Vagina (tissue), 2 donors: ENCODE measurements at regions of chr6 and their contacts with region 1.

Region 1: GRCh38 chr6:6547110-6547879 is 41.2 kb upstream of the LY86 start:
- DNase-seq: peak in 1 of 2 donors; percentile 91
- H3K4me3 ChIP-seq: peak overlapping the region; percentile 37 to 49
- H3K27ac ChIP-seq: no peak overlapping the region
- H3K4me1 ChIP-seq: peaks cover 14% of the 10 kb centered on the region
- H3K27me3 ChIP-seq: no peaks in the 10 kb centered on the region
- CTCF ChIP-seq: peak; percentile 94 to 95 (median 95)
- POLR2A ChIP-seq: no peak

Region 2: DNA sequence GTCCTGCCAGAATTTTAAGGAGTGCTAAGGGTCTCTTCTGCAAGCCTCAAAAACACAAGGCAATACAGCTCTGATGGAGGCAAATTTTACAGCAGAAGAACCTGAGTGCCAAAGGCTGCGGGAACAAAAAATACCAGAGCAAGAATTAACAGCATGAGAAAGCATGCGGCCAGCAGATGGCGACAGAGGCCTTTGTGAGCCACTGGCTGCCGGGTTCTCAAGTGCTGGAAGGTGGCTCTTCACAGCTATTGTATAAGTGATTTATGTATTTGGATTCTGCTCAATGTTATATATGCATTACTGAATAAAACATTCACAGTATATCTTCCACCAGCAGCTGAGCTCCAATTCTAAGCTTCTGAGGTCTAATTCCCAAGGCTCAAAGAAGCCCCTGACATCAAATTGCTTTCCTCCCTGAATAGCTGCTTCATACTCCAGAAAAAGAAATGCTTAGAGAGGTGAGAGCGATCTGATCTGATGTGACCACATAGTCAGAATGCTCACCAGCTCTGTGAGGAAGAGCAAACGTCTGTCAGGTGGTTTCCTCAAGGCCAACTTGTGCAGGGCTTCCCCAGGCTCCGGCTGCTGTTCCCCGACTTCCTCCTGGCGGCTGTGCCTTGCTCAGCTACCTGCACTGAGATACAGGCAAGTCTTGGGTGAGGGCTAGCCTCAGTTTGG is 1403.5 kb before region 1 on chr6:
- intact Hi-C with region 1: loop called (anchors 10 kb)
- DNase-seq: peak in 1 of 2 donors; percentile 81
- H3K4me3 ChIP-seq: no peak overlapping the region
- H3K27ac ChIP-seq: no peak overlapping the region
- H3K4me1 ChIP-seq: no peaks in the 10 kb centered on the region
- H3K27me3 ChIP-seq: no peaks in the 10 kb centered on the region
- CTCF ChIP-seq: peak; percentile 85 to 90 (median 88)
- POLR2A ChIP-seq: no peak

Region 3: GRCh38 chr6:6315660-6316059 is 231.6 kb before region 1 on chr6:
- intact Hi-C with region 1: no loop called
- DNase-seq: no peak
- H3K4me3 ChIP-seq: no peak overlapping the region
- H3K27ac ChIP-seq: no peak overlapping the region
- H3K4me1 ChIP-seq: no peaks in the 10 kb centered on the region
- H3K27me3 ChIP-seq: no peaks in the 10 kb centered on the region
- CTCF ChIP-seq: peak; percentile 9 to 39 (median 35)
- POLR2A ChIP-seq: no peak